ENCODE measurements at regions of chr12 and their contacts with region 1.

Region 1: GRCh38 chr12:9760699-9761418 is at the start of gene CD69:
- DNase-seq: peak; percentile 92
- ATAC-seq: peak; percentile 60
- H3K4me3 Mint-ChIP-seq: peak within 1 kb of the TSS; percentile 92
- H3K27ac Mint-ChIP-seq: peak within 1 kb of the TSS; percentile 94
- H3K4me1 Mint-ChIP-seq: peaks cover 39% of the 10 kb centered on the region
- H3K27me3 Mint-ChIP-seq: no peaks in the 10 kb centered on the region
- total RNA-seq, gene CD69: 115 to 116 TPM

Region 2: DNA sequence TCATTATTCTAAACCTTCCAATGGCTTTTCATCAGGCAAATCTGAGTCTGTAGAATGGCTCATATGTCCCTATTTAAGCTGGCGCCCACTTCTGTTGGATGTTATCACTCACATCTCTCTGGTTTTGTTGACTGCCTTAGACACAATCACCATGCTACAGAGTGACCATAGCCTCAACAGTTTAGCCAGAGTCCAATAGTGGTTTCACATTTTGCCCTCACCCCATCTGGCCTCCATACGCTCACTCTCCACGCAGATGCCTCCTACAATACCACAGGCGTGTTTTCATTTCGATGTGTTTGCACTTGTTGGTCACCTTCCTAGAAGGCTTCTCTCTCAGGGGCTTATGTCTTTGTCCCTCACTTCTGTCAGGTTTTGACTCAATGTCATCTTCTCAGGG is 156.6 kb before region 1 on chr12:
- CTCF ChIA-PET with region 1: no interaction called
- POLR2A ChIA-PET with region 1: no interaction called
- DNase-seq: no peak
- ATAC-seq: no peak
- H3K4me3 Mint-ChIP-seq: peak overlapping the region; percentile 2
- H3K27ac Mint-ChIP-seq: no peak overlapping the region
- H3K4me1 Mint-ChIP-seq: peaks cover 12% of the 10 kb centered on the region
- H3K27me3 Mint-ChIP-seq: no peaks in the 10 kb centered on the region

Region 3: GRCh38 chr12:9626291-9626690 is 134.6 kb before region 1 on chr12:
- CTCF ChIA-PET with region 1: no interaction called
- POLR2A ChIA-PET with region 1: no interaction called
- DNase-seq: no peak
- ATAC-seq: no peak
- H3K4me3 Mint-ChIP-seq: no peak overlapping the region
- H3K27ac Mint-ChIP-seq: no peak overlapping the region
- H3K4me1 Mint-ChIP-seq: no peaks in the 10 kb centered on the region
- H3K27me3 Mint-ChIP-seq: no peaks in the 10 kb centered on the region

Region 4: GRCh38 chr12:9673404-9674225 is 87.2 kb before region 1 on chr12:
- CTCF ChIA-PET with region 1: interaction called, 3 read pairs
- POLR2A ChIA-PET with region 1: interaction called, 188 read pairs
- DNase-seq: peak; percentile 81
- ATAC-seq: peak; percentile 29
- H3K4me3 Mint-ChIP-seq: peak overlapping the region; percentile 86
- H3K27ac Mint-ChIP-seq: peak overlapping the region; percentile 97
- H3K4me1 Mint-ChIP-seq: peaks cover 56% of the 10 kb centered on the region
- H3K27me3 Mint-ChIP-seq: no peaks in the 10 kb centered on the region

Region 5: GRCh38 chr12:9869307-9870161 is 108.7 kb after region 1 on chr12 and contains the start of gene CLEC2B:
- CTCF ChIA-PET with region 1: interaction called, 38 read pairs
- POLR2A ChIA-PET with region 1: interaction called, 251 read pairs
- DNase-seq: peak; percentile 58
- ATAC-seq: peak; percentile 55
- H3K4me3 Mint-ChIP-seq: peak within 1 kb of the TSS; percentile 79
- H3K27ac Mint-ChIP-seq: peak within 1 kb of the TSS; percentile 91
- H3K4me1 Mint-ChIP-seq: peaks cover 22% of the 10 kb centered on the region
- H3K27me3 Mint-ChIP-seq: no peaks in the 10 kb centered on the region
- total RNA-seq, gene CLEC2B: 55.2 to 58.8 TPM

Region 6: GRCh38 chr12:9902539-9903228 is 141.8 kb after region 1 on chr12:
- CTCF ChIA-PET with region 1: no interaction called
- POLR2A ChIA-PET with region 1: no interaction called
- DNase-seq: no peak
- ATAC-seq: no peak
- H3K4me3 Mint-ChIP-seq: no peak overlapping the region
- H3K27ac Mint-ChIP-seq: no peak overlapping the region
- H3K4me1 Mint-ChIP-seq: peaks cover 31% of the 10 kb centered on the region
- H3K27me3 Mint-ChIP-seq: no peaks in the 10 kb centered on the region

Region 7: DNA sequence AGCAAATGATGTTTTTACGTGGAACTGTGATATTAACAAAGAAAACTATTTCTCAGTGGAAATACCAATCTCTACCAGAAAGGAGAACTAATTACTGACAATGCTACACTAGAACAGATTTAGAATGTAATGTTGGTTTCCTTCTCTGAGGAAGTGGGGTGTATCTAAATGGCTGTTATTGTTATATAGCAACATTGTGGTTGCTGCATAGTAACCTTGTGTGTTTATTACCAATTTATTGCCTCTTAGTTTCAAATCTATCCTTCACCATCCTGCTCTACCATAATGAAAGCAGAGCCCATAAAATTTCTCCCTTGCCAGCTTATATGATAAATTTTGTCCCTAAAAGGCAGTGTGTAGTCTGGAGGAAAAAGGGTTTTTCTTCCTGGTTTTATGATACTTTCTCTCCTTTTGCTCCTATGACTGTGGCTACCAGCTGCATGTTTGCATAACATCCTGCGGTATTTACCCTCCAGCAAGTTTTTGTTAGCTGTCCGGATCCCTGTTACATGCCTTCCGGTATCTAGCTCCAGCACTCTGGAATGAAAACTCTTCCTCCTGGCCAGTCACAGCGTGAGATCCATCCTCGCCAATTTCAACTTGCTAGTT is 634.6 kb after region 1 on chr12:
- CTCF ChIA-PET with region 1: no interaction called
- POLR2A ChIA-PET with region 1: interaction called, 20 read pairs
- DNase-seq: no peak
- ATAC-seq: peak; percentile 71
- H3K4me3 Mint-ChIP-seq: peak overlapping the region; percentile 57
- H3K27ac Mint-ChIP-seq: peak overlapping the region; percentile 81
- H3K4me1 Mint-ChIP-seq: peaks cover 67% of the 10 kb centered on the region
- H3K27me3 Mint-ChIP-seq: no peaks in the 10 kb centered on the region

Region 8: GRCh38 chr12:10562306-10562933 is 801.6 kb after region 1 on chr12:
- CTCF ChIA-PET with region 1: interaction called, 3 read pairs
- POLR2A ChIA-PET with region 1: interaction called, 10 read pairs
- DNase-seq: peak; percentile 61
- ATAC-seq: no peak
- H3K4me3 Mint-ChIP-seq: peak overlapping the region; percentile 15
- H3K27ac Mint-ChIP-seq: no peak overlapping the region
- H3K4me1 Mint-ChIP-seq: peaks cover 78% of the 10 kb centered on the region
- H3K27me3 Mint-ChIP-seq: no peaks in the 10 kb centered on the region